HepG2 (cell line): ENCODE measurements at regions of chr7 and their contacts with region 1.

Region 1: GRCh38 chr7:17486835-17487234 is 188.4 kb downstream of the AHR start:
- DNase-seq: peak; percentile 48
- ATAC-seq: peak; percentile 94
- H3K4me3 ChIP-seq: no peak overlapping the region
- H3K27ac ChIP-seq: peak overlapping the region; percentile 36
- H3K4me1 ChIP-seq: peaks cover 26% of the 10 kb centered on the region
- H3K27me3 ChIP-seq: no peaks in the 10 kb centered on the region
- CTCF ChIP-seq: no peak
- EP300 ChIP-seq: peak in 1 of 2 experiments; percentile 69; a peak in 2 of 4 replicates
- POLR2A ChIP-seq: no peak
- RAD21 ChIP-seq: no peak

Region 2: GRCh38 chr7:17506095-17506494 is 19.3 kb after region 1 on chr7:
- CTCF ChIA-PET with region 1: no interaction called
- POLR2A ChIA-PET with region 1: no interaction called
- in situ Hi-C with region 1: no loop called
- intact Hi-C with region 1: loop called (anchors 2 kb)
- DNase-seq: peak; percentile 85
- ATAC-seq: peak; percentile 87
- H3K4me3 ChIP-seq: no peak overlapping the region
- H3K27ac ChIP-seq: no peak overlapping the region
- H3K4me1 ChIP-seq: peaks cover 47% of the 10 kb centered on the region
- H3K27me3 ChIP-seq: no peaks in the 10 kb centered on the region
- CTCF ChIP-seq: no peak
- EP300 ChIP-seq: peak; percentile 71 to 98; a peak in 3 of 4 replicates
- POLR2A ChIP-seq: no peak
- RAD21 ChIP-seq: no peak